Natural killer cell (primary cell): ENCODE measurements at regions of chr14 and their contacts with region 1.

Region 1: DNA sequence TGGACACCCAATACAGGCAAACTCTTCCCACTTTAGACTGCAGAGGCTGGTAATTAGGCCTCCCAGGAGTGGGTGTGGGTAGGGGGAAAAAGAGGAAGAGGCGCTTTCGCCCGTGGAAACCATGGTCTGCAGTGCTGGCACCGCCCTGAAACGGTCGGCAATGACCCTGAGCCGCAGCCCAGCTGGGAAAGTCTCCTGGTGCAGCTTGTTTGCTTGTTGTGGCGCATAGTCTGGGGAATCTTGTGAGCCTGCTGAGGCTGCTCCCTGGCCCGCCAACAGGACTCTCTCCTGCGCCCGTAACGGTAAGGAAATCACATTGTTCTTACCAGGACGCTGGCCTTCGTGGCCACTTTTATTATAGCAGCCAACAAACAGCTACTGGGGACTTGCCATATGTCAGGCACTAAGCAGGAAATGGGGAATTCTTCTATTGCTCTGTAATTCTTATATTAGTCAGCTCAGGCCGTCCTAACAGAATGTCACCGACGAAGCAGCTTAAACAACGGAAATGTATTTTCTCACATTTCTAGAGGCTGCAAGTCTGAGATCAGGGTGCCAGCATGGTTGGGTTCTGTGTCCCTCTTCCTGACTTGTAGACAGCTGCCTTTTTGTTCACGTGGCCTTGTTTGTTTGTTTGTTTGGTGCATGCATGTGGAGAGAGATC is 52.5 kb upstream of the RIN3 start:
- DNase-seq: peak in 1 of 2 donors; percentile 63
- ATAC-seq: peak; percentile 86 to 90 (median 89)
- H3K4me3 ChIP-seq: no peak overlapping the region
- H3K4me3 Mint-ChIP-seq: peak overlapping the region; percentile 41
- H3K27ac ChIP-seq: peak overlapping the region; percentile 70
- H3K27ac Mint-ChIP-seq: peak overlapping the region; percentile 85 to 91
- H3K4me1 ChIP-seq: peaks cover 43% of the 10 kb centered on the region
- H3K4me1 Mint-ChIP-seq: peaks cover 21 to 47% of the 10 kb centered on the region in 2 donors
- H3K27me3 ChIP-seq: no peaks in the 10 kb centered on the region
- H3K27me3 Mint-ChIP-seq: no peaks in the 10 kb centered on the region
- CTCF ChIP-seq: no peak

Region 2: GRCh38 chr14:92513974-92514692 is 53.1 kb after region 1 on chr14:
- intact Hi-C with region 1: loop called (anchors 5 kb)
- DNase-seq: peak; percentile 44 to 66
- ATAC-seq: peak; percentile 33 to 57 (median 37)
- H3K4me3 ChIP-seq: peak overlapping the region; percentile 92
- H3K4me3 Mint-ChIP-seq: peak overlapping the region; percentile 90
- H3K27ac ChIP-seq: peak overlapping the region; percentile 90
- H3K27ac Mint-ChIP-seq: peak overlapping the region; percentile 97 to 98
- H3K4me1 ChIP-seq: peaks cover 59% of the 10 kb centered on the region
- H3K4me1 Mint-ChIP-seq: peaks cover 49 to 63% of the 10 kb centered on the region in 2 donors
- H3K27me3 ChIP-seq: no peaks in the 10 kb centered on the region
- H3K27me3 Mint-ChIP-seq: no peaks in the 10 kb centered on the region
- CTCF ChIP-seq: no peak

Region 3: DNA sequence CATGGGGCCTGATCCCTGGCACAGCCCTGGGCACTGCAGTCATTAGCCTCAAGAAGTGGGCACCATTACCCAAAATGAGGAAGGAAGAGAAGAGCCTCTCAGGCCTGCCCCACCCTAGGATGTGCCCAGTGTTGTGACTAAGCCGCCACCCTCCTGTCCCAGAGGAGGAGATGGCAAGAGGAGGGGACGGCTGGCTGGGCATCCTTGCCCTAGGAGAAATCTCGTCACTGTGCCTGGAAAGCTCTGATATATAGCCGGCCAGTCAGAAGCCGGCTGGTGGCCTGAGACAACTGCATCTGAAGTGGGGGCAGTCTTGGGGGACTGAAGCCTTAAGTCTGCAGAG is 172.2 kb after region 1 on chr14:
- intact Hi-C with region 1: no loop called
- DNase-seq: no peak
- ATAC-seq: peak in 2 of 3 donors; percentile 45 to 72
- H3K4me3 ChIP-seq: no peak overlapping the region
- H3K4me3 Mint-ChIP-seq: peak overlapping the region; percentile 19
- H3K27ac ChIP-seq: peak overlapping the region; percentile 25
- H3K27ac Mint-ChIP-seq: peak overlapping the region; percentile 75 to 85
- H3K4me1 ChIP-seq: peaks cover 34% of the 10 kb centered on the region
- H3K4me1 Mint-ChIP-seq: peaks cover 35 to 60% of the 10 kb centered on the region in 2 donors
- H3K27me3 ChIP-seq: no peaks in the 10 kb centered on the region
- H3K27me3 Mint-ChIP-seq: no peaks in the 10 kb centered on the region
- CTCF ChIP-seq: no peak

Region 4: GRCh38 chr14:93033983-93034670 is 573.1 kb after region 1 on chr14:
- intact Hi-C with region 1: no loop called
- DNase-seq: peak; percentile 53 to 69
- ATAC-seq: peak; percentile 58 to 70 (median 61)
- H3K4me3 ChIP-seq: no peak overlapping the region
- H3K4me3 Mint-ChIP-seq: peak overlapping the region; percentile 60
- H3K27ac ChIP-seq: peak overlapping the region; percentile 91
- H3K27ac Mint-ChIP-seq: peak overlapping the region; percentile 65 to 84
- H3K4me1 ChIP-seq: peaks cover 55% of the 10 kb centered on the region
- H3K4me1 Mint-ChIP-seq: peaks cover 35 to 69% of the 10 kb centered on the region in 2 donors
- H3K27me3 ChIP-seq: no peaks in the 10 kb centered on the region
- H3K27me3 Mint-ChIP-seq: no peaks in the 10 kb centered on the region
- CTCF ChIP-seq: peak; percentile 78